HCT116 (cell line): ENCODE measurements at regions of chr17 and their contacts with region 1.

Region 1: GRCh38 chr17:80195731-80196529 is 24.2 kb downstream of the SGSH start:
- DNase-seq: no peak
- ATAC-seq: peak; percentile 48
- H3K4me3 ChIP-seq: no peak overlapping the region
- H3K27ac ChIP-seq: no peak overlapping the region
- H3K4me1 ChIP-seq: no peaks in the 10 kb centered on the region
- H3K27me3 ChIP-seq: no peaks in the 10 kb centered on the region; the same call in 1 of the 2 replicates
- CTCF ChIP-seq: peak; percentile 88 to 100 (median 98)
- POLR2A ChIP-seq: no peak
- RAD21 ChIP-seq: peak; percentile 95

Region 2: DNA sequence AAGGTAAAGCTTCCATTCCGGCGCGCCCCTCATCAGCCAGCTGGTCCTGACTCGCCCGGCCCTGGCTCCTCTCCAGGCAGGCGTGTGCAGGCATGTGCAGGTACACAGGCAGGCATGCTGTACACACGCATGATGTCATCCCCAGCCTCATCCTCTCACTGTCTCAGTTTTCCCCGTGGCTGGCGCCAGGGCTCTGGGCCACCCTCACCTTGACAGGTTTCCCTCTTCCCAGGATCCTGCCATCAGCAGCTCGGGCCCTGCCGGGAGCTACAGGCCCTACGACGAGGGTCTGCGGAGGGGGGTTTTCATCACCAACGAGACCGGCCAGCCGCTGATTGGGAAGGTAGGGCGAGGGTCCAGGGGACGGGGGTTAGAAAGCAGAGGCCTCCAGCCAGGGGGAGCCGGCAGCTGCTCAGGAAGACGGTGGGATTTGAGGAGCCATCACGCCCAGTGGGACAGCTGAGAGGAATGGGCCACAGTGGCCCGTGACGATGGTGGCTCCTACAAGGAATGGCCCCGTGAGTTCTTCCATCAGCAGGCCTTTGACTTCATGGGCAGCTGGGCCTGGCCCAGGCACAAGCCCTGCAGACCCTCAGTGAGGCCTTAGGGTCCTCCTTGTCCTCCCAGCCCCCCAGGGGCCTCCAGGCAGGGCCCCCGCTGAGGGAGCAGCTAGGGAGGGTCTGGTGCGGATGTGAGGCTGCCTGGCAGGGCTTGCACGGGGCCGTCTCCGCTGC is 86.0 kb before region 1 on chr17:
- CTCF ChIA-PET with region 1: no interaction called
- POLR2A ChIA-PET with region 1: no interaction called
- RAD21 ChIA-PET with region 1: no interaction called
- intact Hi-C with region 1: no loop called
- DNase-seq: no peak
- ATAC-seq: no peak
- H3K4me3 ChIP-seq: no peak overlapping the region
- H3K27ac ChIP-seq: no peak overlapping the region
- H3K4me1 ChIP-seq: peaks cover 0 to under 1% of the 10 kb centered on the region in 2 experiments; a peak in 2 of 4 replicates
- H3K27me3 ChIP-seq: no peaks in the 10 kb centered on the region
- CTCF ChIP-seq: no peak
- POLR2A ChIP-seq: no peak
- RAD21 ChIP-seq: no peak

Region 3: GRCh38 chr17:80212109-80212508 is 16.2 kb after region 1 on chr17:
- CTCF ChIA-PET with region 1: no interaction called
- POLR2A ChIA-PET with region 1: no interaction called
- RAD21 ChIA-PET with region 1: no interaction called
- intact Hi-C with region 1: no loop called
- DNase-seq: no peak
- ATAC-seq: no peak
- H3K4me3 ChIP-seq: no peak overlapping the region
- H3K27ac ChIP-seq: no peak overlapping the region
- H3K4me1 ChIP-seq: no peaks in the 10 kb centered on the region
- H3K27me3 ChIP-seq: no peaks in the 10 kb centered on the region
- CTCF ChIP-seq: no peak
- POLR2A ChIP-seq: no peak
- RAD21 ChIP-seq: no peak

Region 4: GRCh38 chr17:80252607-80253289 is 56.8 kb after region 1 on chr17:
- CTCF ChIA-PET with region 1: no interaction called
- POLR2A ChIA-PET with region 1: no interaction called
- RAD21 ChIA-PET with region 1: interaction called in 1 of 2 experiments, 3 read pairs
- intact Hi-C with region 1: loop called (anchors 1 kb)
- DNase-seq: peak; percentile 46
- ATAC-seq: peak; percentile 90
- H3K4me3 ChIP-seq: no peak overlapping the region
- H3K27ac ChIP-seq: peak overlapping the region; percentile 3; the same call in 1 of the 2 replicates
- H3K4me1 ChIP-seq: peaks cover 31 to 49% of the 10 kb centered on the region in 2 experiments
- H3K27me3 ChIP-seq: no peaks in the 10 kb centered on the region
- CTCF ChIP-seq: peak; percentile 81 to 94 (median 91)
- POLR2A ChIP-seq: no peak
- RAD21 ChIP-seq: peak; percentile 92

Region 5: DNA sequence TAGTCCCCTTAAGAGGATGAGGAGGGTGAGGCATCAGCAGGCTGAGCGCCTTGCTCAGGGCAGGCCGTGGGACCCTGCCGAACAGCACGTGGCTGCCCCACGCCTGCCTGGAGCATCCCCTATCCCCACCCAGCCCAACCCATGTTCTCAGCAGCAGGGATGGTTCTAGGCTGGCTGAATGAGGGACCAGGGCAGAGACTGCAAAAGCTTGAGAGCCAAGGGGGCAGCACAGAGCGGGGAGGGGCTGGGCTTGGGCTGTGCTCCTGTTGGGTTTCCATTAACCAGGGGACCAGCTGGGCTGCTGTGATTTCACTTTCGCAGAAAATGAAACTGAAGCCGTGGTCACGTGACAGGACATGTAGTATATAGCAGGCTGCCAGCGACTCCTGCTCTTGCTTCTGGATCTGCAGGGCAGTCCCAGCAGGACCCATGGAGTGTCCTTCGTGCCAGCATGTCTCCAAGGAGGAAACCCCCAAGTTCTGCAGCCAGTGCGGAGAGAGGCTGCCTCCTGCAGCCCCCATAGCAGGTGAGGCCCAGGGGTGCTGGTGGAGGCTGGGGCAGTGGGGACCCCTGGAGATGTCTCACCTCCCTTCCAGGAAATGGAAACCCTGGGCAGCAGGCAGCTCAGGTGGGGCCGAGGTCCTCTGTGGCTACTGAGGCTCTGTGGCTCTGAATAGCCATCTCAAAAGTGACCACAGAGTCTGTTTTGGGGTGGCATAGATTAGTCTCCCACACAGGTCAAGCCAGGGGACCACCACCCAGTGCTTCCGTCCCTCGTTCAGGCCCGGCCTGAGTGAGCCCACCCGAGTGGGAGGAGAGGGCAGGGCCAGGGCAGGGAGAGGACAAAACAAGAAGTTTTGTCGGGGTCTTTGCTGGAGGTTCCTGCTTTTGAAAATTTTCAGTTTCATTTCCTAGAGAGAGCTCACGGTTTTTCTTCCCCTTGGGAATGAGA is 67.6 kb after region 1 on chr17:
- CTCF ChIA-PET with region 1: no interaction called
- POLR2A ChIA-PET with region 1: no interaction called
- RAD21 ChIA-PET with region 1: no interaction called
- intact Hi-C with region 1: no loop called
- DNase-seq: no peak
- ATAC-seq: no peak
- H3K4me3 ChIP-seq: no peak overlapping the region
- H3K27ac ChIP-seq: no peak overlapping the region; the same call in 1 of the 2 replicates
- H3K4me1 ChIP-seq: peaks cover 16 to 30% of the 10 kb centered on the region in 2 experiments
- H3K27me3 ChIP-seq: no peaks in the 10 kb centered on the region
- CTCF ChIP-seq: no peak
- POLR2A ChIP-seq: no peak
- RAD21 ChIP-seq: no peak

Region 6: GRCh38 chr17:80364216-80364618 is 168.3 kb after region 1 on chr17:
- CTCF ChIA-PET with region 1: no interaction called
- POLR2A ChIA-PET with region 1: no interaction called
- RAD21 ChIA-PET with region 1: no interaction called
- intact Hi-C with region 1: loop called (anchors 1 kb)
- DNase-seq: peak; percentile 8
- ATAC-seq: peak; percentile 86
- H3K4me3 ChIP-seq: no peak overlapping the region
- H3K27ac ChIP-seq: no peak overlapping the region
- H3K4me1 ChIP-seq: no peaks in the 10 kb centered on the region
- H3K27me3 ChIP-seq: no peaks in the 10 kb centered on the region
- CTCF ChIP-seq: peak; percentile 59 to 77 (median 74); a peak in 5 of 6 replicates
- POLR2A ChIP-seq: no peak
- RAD21 ChIP-seq: peak; percentile 81